ENCODE measurements at regions of chr15 and their contacts with region 1.

Region 1: GRCh38 chr15:98523912-98524662 is 124.3 kb upstream of the IGF1R start:
- DNase-seq: no peak
- H3K4me3 ChIP-seq: no peak overlapping the region
- H3K27ac ChIP-seq: peak overlapping the region in 1 of 59 donors; percentile 46
- H3K27me3 ChIP-seq: peaks cover 0 to 8% (median 0%) of the 10 kb centered on the region in 45 donors
- CTCF ChIP-seq: no peak

Region 2: DNA sequence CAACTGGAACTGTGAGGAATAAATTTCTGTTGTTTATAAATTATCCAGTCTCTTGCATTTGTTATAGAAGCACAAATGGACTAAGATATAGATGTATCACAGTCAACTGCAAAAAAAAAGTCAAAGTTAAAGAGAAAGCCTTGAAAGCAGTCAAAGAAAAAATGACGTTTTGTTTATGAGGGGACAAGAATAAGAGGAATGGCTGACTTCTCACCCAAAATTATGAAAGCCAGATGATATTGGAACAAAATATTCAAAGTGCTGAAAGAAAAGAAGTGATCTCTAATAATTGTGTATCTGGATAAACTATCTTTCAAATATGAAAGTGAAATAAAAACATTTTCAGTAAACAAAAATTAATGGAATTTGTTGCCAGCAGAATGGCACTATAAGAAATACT is 47.5 kb before region 1 on chr15:
- intact Hi-C with region 1: no loop called
- DNase-seq: no peak
- H3K4me3 ChIP-seq: no peak overlapping the region
- H3K27ac ChIP-seq: no peak overlapping the region
- H3K27me3 ChIP-seq: no peaks in the 10 kb centered on the region
- CTCF ChIP-seq: no peak

Region 3: DNA sequence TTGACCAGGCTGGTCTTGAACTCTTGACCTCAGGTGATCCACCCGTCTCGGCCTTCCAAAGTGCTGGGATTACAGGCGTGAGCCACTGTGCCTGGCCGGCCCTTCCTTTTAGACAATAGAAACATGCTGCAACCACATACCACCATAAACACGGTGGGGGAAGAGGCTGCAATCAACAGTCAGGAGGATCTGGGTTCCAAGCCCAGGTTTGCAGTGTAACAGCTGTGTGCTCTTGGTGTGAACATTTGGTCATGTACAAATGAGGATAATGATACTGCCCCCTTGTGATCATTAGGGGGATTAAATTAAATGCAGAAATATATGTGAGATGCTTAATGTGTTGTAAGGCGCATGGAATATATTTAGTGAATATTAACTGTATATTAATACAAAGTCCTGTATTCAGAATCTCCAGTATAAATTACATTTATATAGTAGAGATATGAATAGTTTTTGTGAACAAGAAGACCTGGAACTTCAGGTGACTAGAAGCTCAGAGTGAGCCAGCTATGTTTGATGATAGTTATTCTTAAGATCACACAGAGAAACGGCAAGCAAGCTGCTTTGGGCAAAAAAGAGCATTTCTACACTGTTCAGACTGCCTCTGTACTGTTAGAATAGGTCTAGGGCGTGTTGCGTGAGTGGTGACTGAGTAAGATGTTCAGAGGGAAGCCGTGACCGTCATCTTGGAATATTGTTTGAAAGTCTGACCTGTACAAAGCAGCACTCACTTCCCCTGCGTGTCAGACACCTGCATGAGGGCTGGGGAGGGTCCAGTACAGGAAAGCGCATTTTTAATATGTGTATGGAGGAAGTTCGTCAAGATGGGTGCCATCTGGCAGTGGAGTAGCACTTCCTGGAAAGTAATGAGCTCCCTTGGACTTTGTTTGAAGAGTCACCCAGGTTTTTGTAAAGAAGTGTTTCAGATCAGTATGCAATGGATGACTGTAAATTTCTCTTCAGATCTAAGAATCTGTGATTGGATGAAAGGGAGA is 357.7 kb after region 1 on chr15:
- intact Hi-C with region 1: loop called in 1 of 2 experiments (anchors 5 kb)
- DNase-seq: no peak
- H3K4me3 ChIP-seq: no peak overlapping the region
- H3K27ac ChIP-seq: no peak overlapping the region
- H3K27me3 ChIP-seq: no peaks in the 10 kb centered on the region
- CTCF ChIP-seq: peak; percentile 34 to 76 (median 66)